ENCODE measurements at regions of chr1 and their contacts with region 1.

Region 1: GRCh38 chr1:47252369-47252768 is 20.3 kb upstream of the TAL1 start:
- DNase-seq: no peak
- ATAC-seq: no peak
- H3K4me3 ChIP-seq: no peak overlapping the region
- H3K27ac ChIP-seq: no peak overlapping the region
- H3K4me1 ChIP-seq: no peaks in the 10 kb centered on the region
- H3K27me3 ChIP-seq: no peaks in the 10 kb centered on the region
- CTCF ChIP-seq: no peak

Region 2: GRCh38 chr1:47201179-47201578 is 51.2 kb before region 1 on chr1:
- intact Hi-C with region 1: loop called in 1 of 10 experiments (anchors 5 kb)
- DNase-seq: no peak
- ATAC-seq: no peak
- H3K4me3 ChIP-seq: no peak overlapping the region
- H3K27ac ChIP-seq: no peak overlapping the region
- H3K4me1 ChIP-seq: peaks cover 0 to 7% (median 0%) of the 10 kb centered on the region in 9 donors
- H3K27me3 ChIP-seq: peaks cover 0 to 41% (median 0%) of the 10 kb centered on the region in 7 donors
- CTCF ChIP-seq: no peak

Measured in heart right ventricle (tissue), 16 donors.